HepG2 (cell line): ENCODE measurements at regions of chr1 and their contacts with region 1.

Region 1: DNA sequence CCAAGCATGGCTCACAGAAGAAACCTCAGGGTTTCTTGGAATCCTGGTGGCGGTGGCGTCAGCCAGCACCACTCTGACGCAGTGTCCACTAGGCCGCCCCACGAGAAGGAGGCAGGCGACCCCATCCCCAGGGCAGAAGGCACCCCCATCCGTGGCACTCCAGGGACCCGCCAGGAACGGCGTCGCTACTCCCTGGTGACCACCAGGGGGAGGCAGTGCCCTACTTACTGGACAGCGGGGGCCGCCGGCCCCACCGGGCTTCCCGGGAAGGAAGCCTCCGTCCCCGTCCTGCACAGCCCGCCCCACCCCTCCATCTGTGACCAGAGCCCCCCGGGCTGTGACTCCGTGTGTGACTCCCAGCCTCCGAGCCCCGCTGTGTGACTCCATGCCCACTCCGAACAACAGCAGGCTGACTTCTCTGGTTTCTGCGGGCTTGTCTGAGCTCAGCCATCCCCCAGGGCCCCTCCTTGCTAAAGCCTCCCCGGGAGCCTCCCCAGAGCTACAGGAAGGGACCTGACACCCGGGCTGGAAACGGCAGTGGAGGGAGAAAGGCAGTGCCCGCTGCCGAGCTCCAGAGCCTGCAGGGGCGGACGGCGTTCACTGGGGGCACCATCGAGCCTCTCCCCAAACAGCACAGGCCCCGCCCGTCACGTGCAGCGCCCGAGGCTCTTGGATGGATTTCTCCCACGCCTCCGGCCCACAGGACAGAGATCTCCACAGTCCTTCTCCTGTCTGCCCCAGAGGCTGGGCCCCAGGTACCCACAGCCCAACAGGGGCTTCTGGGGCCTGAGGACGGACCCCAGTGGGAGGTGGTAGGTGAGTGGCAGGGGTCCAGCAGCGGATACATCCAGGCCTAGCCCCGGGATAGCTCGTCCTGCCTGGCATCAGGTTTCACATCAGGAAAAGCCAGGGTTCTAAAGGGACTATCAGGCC is 21.1 kb downstream of the KIF17 start:
- DNase-seq: peak; percentile 76
- ATAC-seq: peak; percentile 88
- H3K4me3 ChIP-seq: peak overlapping the region; percentile 61 to 76 (median 68)
- H3K27ac ChIP-seq: no peak overlapping the region
- H3K4me1 ChIP-seq: peaks cover 36% of the 10 kb centered on the region
- H3K27me3 ChIP-seq: peaks cover 6 to 31% of the 10 kb centered on the region in 2 experiments; a peak in 4 of 5 replicates
- CTCF ChIP-seq: peak; percentile 90
- EP300 ChIP-seq: no peak
- POLR2A ChIP-seq: no peak
- RAD21 ChIP-seq: peak; percentile 90

Region 2: GRCh38 chr1:20476265-20477038 is 220.2 kb before region 1 on chr1:
- CTCF ChIA-PET with region 1: no interaction called
- POLR2A ChIA-PET with region 1: no interaction called
- in situ Hi-C with region 1: no loop called
- intact Hi-C with region 1: no loop called
- DNase-seq: peak; percentile 93
- ATAC-seq: peak; percentile 61
- H3K4me3 ChIP-seq: peak overlapping the region; percentile 56 to 73 (median 61)
- H3K27ac ChIP-seq: peak overlapping the region; percentile 92
- H3K4me1 ChIP-seq: peaks cover 90% of the 10 kb centered on the region
- H3K27me3 ChIP-seq: no peaks in the 10 kb centered on the region; a peak in 1 of 5 replicates
- CTCF ChIP-seq: no peak
- EP300 ChIP-seq: peak; percentile 84 to 89
- POLR2A ChIP-seq: peak; percentile 67 to 79; a peak in 3 of 4 replicates
- RAD21 ChIP-seq: no peak; the same call in 1 of the 2 replicates

Region 3: GRCh38 chr1:20551945-20552727 is 144.5 kb before region 1 on chr1 and contains the start of gene FAM43B:
- CTCF ChIA-PET with region 1: no interaction called
- POLR2A ChIA-PET with region 1: no interaction called
- in situ Hi-C with region 1: no loop called
- intact Hi-C with region 1: no loop called
- DNase-seq: peak; percentile 88
- ATAC-seq: peak; percentile 93
- H3K4me3 ChIP-seq: peak within 1 kb of the TSS; percentile 57 to 81 (median 75)
- H3K27ac ChIP-seq: peak within 1 kb of the TSS; percentile 95
- H3K4me1 ChIP-seq: peaks cover 34% of the 10 kb centered on the region
- H3K27me3 ChIP-seq: no peaks in the 10 kb centered on the region
- CTCF ChIP-seq: no peak
- EP300 ChIP-seq: peak in 1 of 2 experiments; percentile 46; a peak in 1 of 4 replicates
- POLR2A ChIP-seq: peak; percentile 95 to 96
- RAD21 ChIP-seq: no peak
- total RNA-seq, gene FAM43B: 3.2 and 3.7 TPM in 2 replicates

Region 4: DNA sequence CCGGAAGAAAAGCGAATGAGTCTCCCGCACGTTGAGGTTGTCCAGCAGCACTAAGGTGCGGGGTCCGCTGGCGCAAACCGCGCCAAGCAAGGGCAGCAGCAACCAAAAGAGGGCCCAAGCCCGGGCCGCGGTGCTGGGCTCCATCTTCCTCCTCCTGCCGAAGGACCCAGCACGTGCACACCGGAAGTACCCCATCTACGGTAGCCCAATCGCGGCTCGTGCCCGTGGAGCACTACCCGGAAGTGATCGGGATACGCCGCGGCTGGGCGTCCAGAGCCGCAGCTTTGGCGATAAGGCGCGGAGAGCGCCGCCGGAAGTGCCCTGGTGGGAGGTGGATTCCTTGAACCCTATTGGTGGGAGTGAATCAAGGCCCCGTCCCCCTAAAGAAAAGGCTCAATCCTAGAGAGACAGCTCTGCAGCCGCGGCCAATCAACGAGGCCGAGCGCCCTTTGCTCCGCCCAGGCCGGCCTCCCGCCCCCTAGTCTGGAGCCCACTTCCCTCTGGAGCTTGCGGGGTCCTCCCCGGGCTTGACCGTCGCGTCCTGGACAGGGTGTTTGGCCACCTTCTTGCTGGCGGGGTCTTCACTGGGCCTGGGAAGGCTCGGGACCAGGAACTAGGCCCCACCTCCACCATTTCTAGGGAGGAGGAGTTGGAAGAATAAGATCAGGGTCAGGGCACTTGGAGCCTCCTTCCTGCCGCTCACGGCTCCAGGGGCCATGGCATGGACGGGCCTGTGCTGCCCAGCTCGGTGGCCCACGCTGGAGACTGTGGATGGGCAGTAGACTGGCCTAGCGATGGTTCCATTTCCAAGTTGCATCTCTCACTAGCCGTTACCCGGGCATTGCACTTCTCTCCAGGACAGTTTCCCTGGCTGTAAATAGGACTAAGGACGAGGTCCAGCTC is 35.2 kb before region 1 on chr1 and contains the start of gene DDOST:
- CTCF ChIA-PET with region 1: no interaction called
- POLR2A ChIA-PET with region 1: interaction called, 12 read pairs
- in situ Hi-C with region 1: no loop called
- intact Hi-C with region 1: no loop called
- DNase-seq: peak; percentile 98
- ATAC-seq: peak; percentile 95
- H3K4me3 ChIP-seq: peak within 1 kb of the TSS; percentile 77 to 98 (median 89)
- H3K27ac ChIP-seq: peak within 1 kb of the TSS; percentile 66
- H3K4me1 ChIP-seq: peaks cover 47% of the 10 kb centered on the region
- H3K27me3 ChIP-seq: no peaks in the 10 kb centered on the region; a peak in 1 of 5 replicates
- CTCF ChIP-seq: peak; percentile 76
- EP300 ChIP-seq: no peak
- POLR2A ChIP-seq: peak; percentile 62 to 84; a peak in 3 of 4 replicates
- RAD21 ChIP-seq: no peak
- total RNA-seq, gene DDOST: 167 and 335 TPM in 2 replicates

Region 5: GRCh38 chr1:20682571-20683236 is 14.0 kb before region 1 on chr1:
- CTCF ChIA-PET with region 1: no interaction called
- POLR2A ChIA-PET with region 1: no interaction called
- in situ Hi-C with region 1: no loop called
- intact Hi-C with region 1: no loop called
- DNase-seq: no peak
- ATAC-seq: no peak
- H3K4me3 ChIP-seq: no peak overlapping the region
- H3K27ac ChIP-seq: no peak overlapping the region
- H3K4me1 ChIP-seq: peaks cover 37% of the 10 kb centered on the region
- H3K27me3 ChIP-seq: peaks cover 2 to 56% of the 10 kb centered on the region in 2 experiments; a peak in 4 of 5 replicates
- CTCF ChIP-seq: no peak
- EP300 ChIP-seq: no peak
- POLR2A ChIP-seq: no peak
- RAD21 ChIP-seq: no peak

Region 6: DNA sequence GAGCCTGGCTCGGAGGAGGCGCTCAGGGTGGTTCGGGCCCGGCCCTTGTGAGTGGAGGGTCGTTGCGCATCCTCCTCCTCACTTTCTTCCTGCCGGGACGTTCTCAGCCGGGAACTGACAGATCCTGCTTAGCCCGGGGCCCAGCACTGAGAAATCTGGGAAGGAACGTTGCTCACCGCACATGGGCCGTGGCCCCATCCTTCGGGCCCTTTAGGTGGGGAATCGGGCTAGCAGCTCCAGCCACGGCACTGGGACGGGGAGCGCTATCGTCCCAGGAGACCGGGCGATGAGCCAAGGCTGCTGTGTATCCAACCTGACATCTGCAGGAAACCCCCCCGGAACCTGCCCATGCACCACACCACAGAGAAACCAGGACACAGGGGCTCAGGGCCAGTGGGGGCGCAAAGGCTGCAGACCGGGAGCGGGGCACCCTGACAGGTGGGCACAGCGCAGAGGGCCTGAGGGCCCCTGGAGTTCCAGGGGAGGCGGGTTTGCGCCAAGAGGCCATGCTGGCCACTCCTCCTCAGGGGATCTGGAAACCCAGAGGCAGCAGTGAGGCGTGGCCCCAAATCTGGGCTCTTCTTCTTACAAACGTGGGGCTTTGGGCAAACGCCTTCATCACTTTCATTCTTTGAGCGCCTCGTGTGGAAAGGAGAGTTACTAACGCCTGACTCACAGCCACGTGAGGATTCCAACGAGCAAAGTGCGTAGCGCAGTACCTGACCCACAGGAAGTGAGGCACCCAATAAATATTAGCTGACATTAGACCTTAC is 36.1 kb after region 1 on chr1 and contains the start of gene SH2D5:
- CTCF ChIA-PET with region 1: interaction called, 4 read pairs
- POLR2A ChIA-PET with region 1: interaction called, 7 read pairs
- in situ Hi-C with region 1: no loop called
- intact Hi-C with region 1: loop called (anchors 1 kb)
- DNase-seq: peak; percentile 94
- ATAC-seq: peak; percentile 74
- H3K4me3 ChIP-seq: peak within 1 kb of the TSS; percentile 62 to 79 (median 65)
- H3K27ac ChIP-seq: peak within 1 kb of the TSS; percentile 29
- H3K4me1 ChIP-seq: peaks cover 57% of the 10 kb centered on the region
- H3K27me3 ChIP-seq: peaks cover 5 to 21% of the 10 kb centered on the region in 2 experiments; a peak in 3 of 5 replicates
- CTCF ChIP-seq: peak; percentile 49
- EP300 ChIP-seq: peak; percentile 42 to 58; a peak in 3 of 4 replicates
- POLR2A ChIP-seq: peak in 1 of 2 experiments; percentile 50; a peak in 2 of 4 replicates
- RAD21 ChIP-seq: peak; percentile 48; the same call in 1 of the 2 replicates
- total RNA-seq, gene SH2D5: 1.7 and 3.4 TPM in 2 replicates

Region 7: GRCh38 chr1:20751462-20751990 is 54.9 kb after region 1 on chr1:
- CTCF ChIA-PET with region 1: no interaction called
- POLR2A ChIA-PET with region 1: no interaction called
- in situ Hi-C with region 1: no loop called
- intact Hi-C with region 1: no loop called
- DNase-seq: no peak
- ATAC-seq: no peak
- H3K4me3 ChIP-seq: no peak overlapping the region
- H3K27ac ChIP-seq: no peak overlapping the region
- H3K4me1 ChIP-seq: no peaks in the 10 kb centered on the region
- H3K27me3 ChIP-seq: no peaks in the 10 kb centered on the region
- CTCF ChIP-seq: no peak
- EP300 ChIP-seq: no peak
- POLR2A ChIP-seq: no peak
- RAD21 ChIP-seq: no peak

Region 8: GRCh38 chr1:20786253-20787028 is 89.8 kb after region 1 on chr1:
- CTCF ChIA-PET with region 1: no interaction called
- POLR2A ChIA-PET with region 1: interaction called, 13 read pairs
- in situ Hi-C with region 1: no loop called
- intact Hi-C with region 1: no loop called
- DNase-seq: peak; percentile 95
- ATAC-seq: peak; percentile 80
- H3K4me3 ChIP-seq: peak overlapping the region; percentile 88 to 99 (median 92)
- H3K27ac ChIP-seq: peak overlapping the region; percentile 99
- H3K4me1 ChIP-seq: peaks cover 41% of the 10 kb centered on the region
- H3K27me3 ChIP-seq: no peaks in the 10 kb centered on the region; a peak in 1 of 5 replicates
- CTCF ChIP-seq: 0 out of 2 replicates have a peak, but pooled peaks have one; percentile 15
- EP300 ChIP-seq: no peak
- POLR2A ChIP-seq: peak; percentile 67 to 86
- RAD21 ChIP-seq: peak; percentile 64

Region 9: GRCh38 chr1:21200767-21201166 is 504.1 kb after region 1 on chr1:
- CTCF ChIA-PET with region 1: interaction called, 27 read pairs
- POLR2A ChIA-PET with region 1: interaction called, 7 read pairs
- in situ Hi-C with region 1: loop called (anchors 5 kb)
- intact Hi-C with region 1: loop called (anchors 2 kb)
- DNase-seq: no peak
- ATAC-seq: no peak
- H3K4me3 ChIP-seq: no peak overlapping the region
- H3K27ac ChIP-seq: no peak overlapping the region
- H3K4me1 ChIP-seq: no peaks in the 10 kb centered on the region
- H3K27me3 ChIP-seq: no peaks in the 10 kb centered on the region; a peak in 1 of 5 replicates
- CTCF ChIP-seq: no peak
- EP300 ChIP-seq: no peak
- POLR2A ChIP-seq: no peak
- RAD21 ChIP-seq: no peak